Activated CD8-positive, alpha-beta memory T cell treated with anti-CD3 and anti-CD28 coated beads, Interleukin-2, amount 10 ng/mL, durations not matched to agents 7 days and 5 days (primary cell): ENCODE measurements at regions of chr1 and their contacts with region 1.

Region 1: GRCh38 chr1:209790286-209791193 is 6.2 kb upstream of the C1orf74 start:
- DNase-seq: no peak
- ATAC-seq: no peak
- H3K4me3 Mint-ChIP-seq: no peak overlapping the region
- H3K27ac Mint-ChIP-seq: no peak overlapping the region
- H3K4me1 Mint-ChIP-seq: peaks cover 22% of the 10 kb centered on the region
- H3K27me3 Mint-ChIP-seq: no peaks in the 10 kb centered on the region

Region 2: GRCh38 chr1:209756615-209757445 is 33.7 kb before region 1 on chr1:
- CTCF ChIA-PET with region 1: no interaction called
- DNase-seq: peak; percentile 65
- ATAC-seq: peak; percentile 42
- H3K4me3 Mint-ChIP-seq: peak overlapping the region; percentile 95
- H3K27ac Mint-ChIP-seq: peak overlapping the region; percentile 93
- H3K4me1 Mint-ChIP-seq: peaks cover 74% of the 10 kb centered on the region
- H3K27me3 Mint-ChIP-seq: no peaks in the 10 kb centered on the region

Region 3: DNA sequence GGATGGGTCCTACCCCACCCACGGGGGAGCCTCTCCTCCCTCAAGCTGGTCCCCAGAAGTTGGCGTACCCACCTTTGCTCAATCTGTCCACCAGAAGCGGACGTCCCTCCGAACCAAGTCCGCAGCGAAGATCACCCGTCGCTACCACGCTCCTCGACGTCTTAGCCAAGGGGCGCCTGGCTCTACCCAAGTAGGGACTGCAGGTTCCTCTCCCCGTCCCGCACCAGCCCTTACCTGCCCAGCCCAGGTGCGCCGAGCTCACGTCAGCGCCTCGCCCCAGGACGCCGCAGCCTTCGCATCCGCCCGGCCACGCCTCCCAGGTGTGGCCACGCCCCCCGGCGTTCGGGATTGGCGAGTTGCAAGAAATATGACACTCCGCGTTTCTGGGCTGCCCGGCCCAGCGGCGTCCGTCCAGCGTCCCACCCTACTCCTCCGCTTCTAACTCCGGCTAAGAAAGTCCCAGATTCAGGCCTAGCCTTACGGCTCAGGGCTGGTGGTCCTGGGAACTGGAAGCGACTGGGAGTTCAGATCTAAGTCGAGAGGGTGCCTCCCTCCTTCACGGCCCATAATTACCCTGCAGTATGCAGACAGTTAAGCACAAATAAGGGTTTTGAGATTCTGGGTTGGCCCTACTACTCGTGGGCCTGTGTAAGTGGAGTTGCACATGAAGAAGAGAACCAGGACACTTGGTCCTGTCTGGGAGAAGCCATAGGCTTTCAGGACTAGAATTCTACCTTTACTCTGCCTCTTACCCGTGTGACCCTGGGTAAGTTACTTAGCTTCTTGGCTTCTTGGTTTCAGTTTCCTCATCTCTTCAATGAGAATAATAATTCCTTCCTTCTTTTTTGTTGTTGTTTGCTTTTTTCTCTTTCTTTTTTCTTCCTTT is 15.6 kb after region 1 on chr1 and contains the start of gene IRF6:
- CTCF ChIA-PET with region 1: interaction called, 10 read pairs
- DNase-seq: peak; percentile 89
- ATAC-seq: peak; percentile 96
- H3K4me3 Mint-ChIP-seq: peak within 1 kb of the TSS; percentile 83
- H3K27ac Mint-ChIP-seq: peak within 1 kb of the TSS; percentile 93
- H3K4me1 Mint-ChIP-seq: peaks cover 18% of the 10 kb centered on the region
- H3K27me3 Mint-ChIP-seq: peaks cover 9% of the 10 kb centered on the region
- total RNA-seq, gene IRF6: 1.3 to 1.7 TPM

Region 4: GRCh38 chr1:209983953-209984352 is 193.4 kb after region 1 on chr1:
- CTCF ChIA-PET with region 1: no interaction called
- DNase-seq: no peak
- ATAC-seq: no peak
- H3K4me3 Mint-ChIP-seq: no peak overlapping the region
- H3K27ac Mint-ChIP-seq: no peak overlapping the region
- H3K4me1 Mint-ChIP-seq: no peaks in the 10 kb centered on the region
- H3K27me3 Mint-ChIP-seq: peaks cover 19% of the 10 kb centered on the region